HCT116 (cell line): ENCODE measurements at regions of chr9 and their contacts with region 1.

Region 1: GRCh38 chr9:32579706-32580331 is 6.9 kb upstream of the NDUFB6 start:
- DNase-seq: peak; percentile 48
- ATAC-seq: peak; percentile 49; the same call in 1 of the 2 replicates
- H3K4me3 ChIP-seq: no peak overlapping the region
- H3K27ac ChIP-seq: no peak overlapping the region
- H3K4me1 ChIP-seq: no peaks in the 10 kb centered on the region
- H3K27me3 ChIP-seq: no peaks in the 10 kb centered on the region
- CTCF ChIP-seq: peak; percentile 85 to 94 (median 91)
- POLR2A ChIP-seq: no peak
- RAD21 ChIP-seq: peak; percentile 83

Region 2: GRCh38 chr9:32344551-32345182 is 235.2 kb before region 1 on chr9:
- CTCF ChIA-PET with region 1: no interaction called
- POLR2A ChIA-PET with region 1: no interaction called
- RAD21 ChIA-PET with region 1: no interaction called
- intact Hi-C with region 1: no loop called
- DNase-seq: no peak
- ATAC-seq: no peak
- H3K4me3 ChIP-seq: no peak overlapping the region
- H3K27ac ChIP-seq: no peak overlapping the region
- H3K4me1 ChIP-seq: no peaks in the 10 kb centered on the region
- H3K27me3 ChIP-seq: 0 out of 2 replicates have a peak, but pooled peaks cover 3% of the 10 kb centered on the region
- CTCF ChIP-seq: no peak
- POLR2A ChIP-seq: no peak
- RAD21 ChIP-seq: no peak

Region 3: GRCh38 chr9:32384364-32385151 is 195.3 kb before region 1 on chr9 and contains the start of gene ACO1:
- CTCF ChIA-PET with region 1: interaction called, 553 read pairs
- POLR2A ChIA-PET with region 1: interaction called, 24 read pairs
- RAD21 ChIA-PET with region 1: interaction called, 33 to 38 read pairs
- intact Hi-C with region 1: no loop called
- DNase-seq: peak; percentile 56
- ATAC-seq: peak; percentile 92
- H3K4me3 ChIP-seq: peak within 1 kb of the TSS; percentile 71 to 85
- H3K27ac ChIP-seq: peak within 1 kb of the TSS; percentile 48
- H3K4me1 ChIP-seq: peaks cover 3 to 8% of the 10 kb centered on the region in 2 experiments; a peak in 3 of 4 replicates
- H3K27me3 ChIP-seq: no peaks in the 10 kb centered on the region
- CTCF ChIP-seq: no peak
- POLR2A ChIP-seq: peak; percentile 13
- RAD21 ChIP-seq: no peak
- total RNA-seq, gene ACO1: 36.2 TPM

Region 4: DNA sequence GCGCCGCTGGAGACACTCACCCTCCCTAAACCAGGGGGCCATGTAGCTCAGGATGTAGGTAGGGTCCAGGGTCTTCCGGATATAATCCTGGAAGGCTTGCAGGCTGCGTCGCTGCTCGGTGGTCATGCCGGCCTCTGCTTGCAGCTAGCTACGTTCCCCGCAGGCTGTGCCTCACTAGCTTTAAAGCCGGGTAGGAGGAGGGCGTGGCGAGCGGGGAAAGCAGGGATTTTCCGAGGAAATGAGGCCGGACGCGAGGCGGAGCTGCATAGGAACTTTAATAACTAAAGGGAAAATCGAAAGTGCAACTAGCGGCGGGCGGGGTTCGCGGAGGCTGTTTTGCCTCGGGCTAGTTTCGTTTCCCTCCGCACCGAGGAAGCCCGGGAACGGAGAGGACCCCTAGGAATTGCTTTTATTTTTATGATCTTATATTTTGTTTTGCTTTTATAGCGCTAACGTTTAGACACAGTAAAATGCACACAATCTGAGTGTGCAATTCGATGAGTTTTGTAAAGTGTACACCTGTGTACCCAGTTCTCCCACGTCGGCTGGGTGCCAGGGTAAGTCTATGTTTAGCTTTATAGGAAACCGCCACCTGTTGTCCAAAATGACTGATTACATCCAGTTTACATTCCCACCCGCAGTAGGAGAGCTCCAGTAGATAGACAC is 53.6 kb before region 1 on chr9 and contains the start of gene RIGI:
- CTCF ChIA-PET with region 1: interaction called, 11 read pairs
- POLR2A ChIA-PET with region 1: no interaction called
- RAD21 ChIA-PET with region 1: no interaction called
- intact Hi-C with region 1: no loop called
- DNase-seq: peak; percentile 85
- ATAC-seq: peak; percentile 86
- H3K4me3 ChIP-seq: peak within 1 kb of the TSS; percentile 76 to 81
- H3K27ac ChIP-seq: peak within 1 kb of the TSS; percentile 76
- H3K4me1 ChIP-seq: peaks cover 11 to 22% of the 10 kb centered on the region in 2 experiments; a peak in 3 of 4 replicates
- H3K27me3 ChIP-seq: no peaks in the 10 kb centered on the region
- CTCF ChIP-seq: peak; percentile 49 to 59 (median 50); a peak in 5 of 6 replicates
- POLR2A ChIP-seq: no peak
- RAD21 ChIP-seq: peak; percentile 73
- total RNA-seq, gene RIGI: 5.5 TPM

Region 5: GRCh38 chr9:32603914-32604741 is 24.3 kb after region 1 on chr9:
- CTCF ChIA-PET with region 1: interaction called, 13 read pairs
- POLR2A ChIA-PET with region 1: no interaction called
- RAD21 ChIA-PET with region 1: no interaction called
- intact Hi-C with region 1: no loop called
- DNase-seq: peak; percentile 81
- ATAC-seq: peak; percentile 100
- H3K4me3 ChIP-seq: peak overlapping the region; percentile 24 to 36
- H3K27ac ChIP-seq: no peak overlapping the region
- H3K4me1 ChIP-seq: peaks cover 5 to 12% of the 10 kb centered on the region in 2 experiments; a peak in 3 of 4 replicates
- H3K27me3 ChIP-seq: no peaks in the 10 kb centered on the region
- CTCF ChIP-seq: no peak
- POLR2A ChIP-seq: no peak
- RAD21 ChIP-seq: 0 out of 2 replicates have a peak, but pooled peaks have one; percentile 10

Region 6: DNA sequence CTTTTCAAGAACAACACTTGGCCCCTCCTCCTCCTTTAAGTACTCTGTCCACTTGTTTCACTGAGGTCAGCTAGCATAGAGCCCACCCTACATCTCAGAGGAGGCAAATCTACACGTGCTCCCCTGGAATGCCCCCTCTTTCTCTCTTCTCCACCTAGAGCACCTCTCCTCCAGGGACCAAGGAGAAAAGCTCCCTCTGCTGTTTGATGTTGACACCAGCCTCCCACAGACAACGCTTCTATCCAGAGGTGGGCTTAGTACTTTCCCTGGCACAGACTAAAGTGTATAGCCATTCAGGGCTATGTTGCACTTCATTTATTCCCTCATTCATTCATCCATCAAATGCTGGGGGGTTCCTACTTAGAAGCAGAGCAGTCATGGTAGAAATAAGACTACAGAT is 123.8 kb after region 1 on chr9:
- CTCF ChIA-PET with region 1: interaction called, 8 read pairs
- POLR2A ChIA-PET with region 1: no interaction called
- RAD21 ChIA-PET with region 1: no interaction called
- intact Hi-C with region 1: loop called (anchors 2 kb)
- DNase-seq: no peak
- ATAC-seq: peak; percentile 78
- H3K4me3 ChIP-seq: no peak overlapping the region
- H3K27ac ChIP-seq: no peak overlapping the region
- H3K4me1 ChIP-seq: peaks cover 6 to 9% of the 10 kb centered on the region in 2 experiments; a peak in 3 of 4 replicates
- H3K27me3 ChIP-seq: peaks cover 15% of the 10 kb centered on the region; the same call in 1 of the 2 replicates
- CTCF ChIP-seq: peak; percentile 52 to 57 (median 56); a peak in 5 of 6 replicates
- POLR2A ChIP-seq: no peak
- RAD21 ChIP-seq: peak; percentile 65

Region 7: DNA sequence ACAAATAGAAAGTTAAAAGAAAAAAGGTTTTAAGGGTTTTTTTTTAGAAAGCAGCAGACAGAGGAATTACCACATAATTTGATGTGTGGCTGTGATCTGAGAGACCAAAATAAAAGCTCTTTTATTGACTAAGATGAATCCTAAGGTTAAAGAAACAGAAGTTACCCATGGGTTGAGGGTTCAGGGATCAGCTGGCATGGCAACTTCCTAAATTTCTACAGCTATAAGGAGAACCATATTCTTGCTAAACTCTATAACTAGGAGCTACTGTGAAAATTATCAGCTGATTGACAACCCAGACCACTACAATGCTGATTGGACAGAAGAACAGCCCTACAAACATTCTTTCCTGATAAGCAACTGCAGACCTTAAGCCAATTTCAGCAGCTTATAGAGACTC is 243.7 kb after region 1 on chr9:
- CTCF ChIA-PET with region 1: no interaction called
- POLR2A ChIA-PET with region 1: no interaction called
- RAD21 ChIA-PET with region 1: no interaction called
- intact Hi-C with region 1: loop called (anchors 10 kb)
- DNase-seq: no peak
- ATAC-seq: no peak
- H3K4me3 ChIP-seq: no peak overlapping the region
- H3K27ac ChIP-seq: no peak overlapping the region
- H3K4me1 ChIP-seq: no peaks in the 10 kb centered on the region
- H3K27me3 ChIP-seq: peaks cover 64% of the 10 kb centered on the region
- CTCF ChIP-seq: no peak
- POLR2A ChIP-seq: no peak
- RAD21 ChIP-seq: no peak

Region 8: GRCh38 chr9:32968101-32969011 is 388.5 kb after region 1 on chr9:
- CTCF ChIA-PET with region 1: interaction called, 154 read pairs
- POLR2A ChIA-PET with region 1: no interaction called
- RAD21 ChIA-PET with region 1: interaction called, 6 to 9 read pairs
- intact Hi-C with region 1: loop called (anchors 1 kb)
- DNase-seq: peak; percentile 6
- ATAC-seq: no peak
- H3K4me3 ChIP-seq: no peak overlapping the region
- H3K27ac ChIP-seq: no peak overlapping the region
- H3K4me1 ChIP-seq: no peaks in the 10 kb centered on the region
- H3K27me3 ChIP-seq: no peaks in the 10 kb centered on the region
- CTCF ChIP-seq: peak; percentile 73 to 89 (median 82)
- POLR2A ChIP-seq: no peak
- RAD21 ChIP-seq: peak; percentile 78